ENCODE measurements at regions of chr2 and their contacts with region 1.

Region 1: DNA sequence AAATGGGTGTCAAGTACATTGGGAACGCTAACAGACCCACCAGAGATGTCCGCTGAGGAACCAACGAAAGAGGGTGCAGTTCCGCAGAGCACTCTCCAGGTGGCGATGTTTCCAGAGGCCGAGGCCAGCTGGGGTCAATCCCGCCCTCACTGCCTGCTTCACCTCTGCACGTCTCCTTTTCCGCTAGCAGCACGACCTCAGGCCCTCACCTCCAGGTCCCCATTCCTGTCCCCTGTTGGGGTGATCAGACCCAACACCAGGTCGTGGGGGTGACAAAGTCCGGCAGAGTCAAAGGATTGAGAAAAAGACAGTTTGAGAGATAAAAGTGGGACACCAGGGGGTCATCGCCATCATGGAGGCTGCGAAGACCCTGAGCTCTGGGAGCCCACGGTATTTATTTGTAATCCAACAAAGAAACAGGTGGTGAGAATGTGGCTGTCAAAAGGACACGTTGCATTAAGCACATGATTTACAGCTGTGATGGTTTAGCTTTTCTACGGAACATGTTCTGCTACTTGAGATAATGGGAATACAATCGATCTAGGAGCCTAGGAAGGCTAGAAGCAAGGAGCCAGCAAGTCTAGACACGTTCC is 27.3 kb downstream of the ZAP70 start:
- DNase-seq: peak; percentile 38 to 65 (median 60)
- H3K4me3 ChIP-seq: no peak overlapping the region
- H3K27ac ChIP-seq: no peak overlapping the region
- H3K4me1 ChIP-seq: peaks cover 0 to 7% (median 4%) of the 10 kb centered on the region in 4 experiments
- H3K27me3 ChIP-seq: no peaks in the 10 kb centered on the region

Region 2: GRCh38 chr2:97713296-97714083 is 27.2 kb before region 1 on chr2 and contains the start of gene ZAP70:
- CTCF ChIA-PET with region 1: interaction called, 131 read pairs
- POLR2A ChIA-PET with region 1: interaction called, 3 read pairs
- DNase-seq: peak in 2 of 3 donors; percentile 48 to 58
- H3K4me3 ChIP-seq: no peak within 1 kb of the TSS
- H3K27ac ChIP-seq: peak within 1 kb of the TSS; percentile 44 to 68
- H3K4me1 ChIP-seq: peaks cover 2 to 46% (median 41%) of the 10 kb centered on the region in 4 experiments
- H3K27me3 ChIP-seq: no peaks in the 10 kb centered on the region

Region 3: GRCh38 chr2:97722212-97722611 is 18.5 kb before region 1 on chr2:
- CTCF ChIA-PET with region 1: interaction called, 14 read pairs
- POLR2A ChIA-PET with region 1: no interaction called
- DNase-seq: no peak
- H3K4me3 ChIP-seq: no peak overlapping the region
- H3K27ac ChIP-seq: no peak overlapping the region
- H3K4me1 ChIP-seq: peaks cover 0 to 27% (median 24%) of the 10 kb centered on the region in 4 experiments
- H3K27me3 ChIP-seq: peaks cover 0 to 10% (median 0%) of the 10 kb centered on the region in 5 experiments

Region 4: DNA sequence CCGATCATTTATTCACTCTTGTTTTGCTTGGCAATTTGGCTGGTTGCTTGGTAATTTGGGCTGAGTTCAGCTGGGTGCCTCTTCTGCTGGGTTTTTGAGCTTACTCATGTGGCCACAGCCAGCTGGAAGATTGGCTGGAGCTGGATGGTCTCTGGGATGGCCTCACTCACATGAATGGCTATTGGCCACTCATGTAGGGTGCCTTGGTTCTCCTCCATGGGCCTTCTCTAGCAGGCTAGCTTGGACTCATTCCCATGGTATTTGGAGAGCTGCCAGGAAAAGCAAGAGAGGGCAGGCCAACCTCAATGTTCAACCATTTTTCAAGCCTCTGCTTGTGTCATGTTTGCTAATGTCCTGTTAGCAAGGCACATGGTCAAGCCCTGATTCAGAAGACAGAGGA is 10.4 kb before region 1 on chr2:
- CTCF ChIA-PET with region 1: interaction called, 29 read pairs
- POLR2A ChIA-PET with region 1: no interaction called
- DNase-seq: no peak
- H3K4me3 ChIP-seq: no peak overlapping the region
- H3K27ac ChIP-seq: no peak overlapping the region
- H3K4me1 ChIP-seq: no peaks in the 10 kb centered on the region
- H3K27me3 ChIP-seq: no peaks in the 10 kb centered on the region

Region 5: GRCh38 chr2:97761192-97761591 is 20.5 kb after region 1 on chr2:
- CTCF ChIA-PET with region 1: interaction called, 11 read pairs
- POLR2A ChIA-PET with region 1: interaction called, 3 read pairs
- DNase-seq: peak in 2 of 3 donors; percentile 32 to 60
- H3K4me3 ChIP-seq: peak overlapping the region in 1 of 7 experiments; percentile 52
- H3K27ac ChIP-seq: no peak overlapping the region
- H3K4me1 ChIP-seq: peaks cover 0 to 38% (median 7%) of the 10 kb centered on the region in 4 experiments
- H3K27me3 ChIP-seq: no peaks in the 10 kb centered on the region

Region 6: DNA sequence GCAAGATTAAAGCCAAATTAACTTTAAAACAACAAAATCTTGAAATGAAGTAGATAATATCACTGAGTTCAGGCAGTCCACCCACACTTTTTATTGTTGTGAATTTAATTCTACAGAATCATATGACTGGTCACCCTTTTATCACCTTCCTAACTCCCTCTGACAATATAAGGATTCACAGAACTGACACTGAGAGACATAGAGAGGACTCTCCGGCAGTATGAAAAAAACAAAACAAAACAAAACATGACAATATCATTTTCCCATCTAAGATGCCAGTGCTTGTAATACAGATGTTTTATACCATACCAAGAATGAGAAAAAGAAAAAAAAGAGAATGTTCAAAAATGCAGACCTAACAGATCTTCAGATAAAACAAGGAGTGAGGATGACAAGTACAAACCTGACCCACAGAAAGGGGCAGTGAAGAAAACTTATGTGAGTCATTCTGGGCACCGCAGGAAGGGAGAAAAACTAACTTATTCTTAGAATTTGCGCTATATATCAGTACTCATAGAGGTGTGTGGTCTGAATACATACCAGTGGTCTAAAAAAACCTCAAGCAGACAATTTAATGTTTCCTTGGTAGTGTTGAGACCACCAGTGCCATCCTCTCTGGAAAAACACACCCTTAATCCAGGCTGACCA is 109.3 kb after region 1 on chr2:
- CTCF ChIA-PET with region 1: no interaction called
- POLR2A ChIA-PET with region 1: no interaction called
- DNase-seq: peak in 1 of 3 donors; percentile 17
- H3K4me3 ChIP-seq: no peak overlapping the region
- H3K27ac ChIP-seq: no peak overlapping the region
- H3K4me1 ChIP-seq: peaks cover 0 to 9% (median 0%) of the 10 kb centered on the region in 4 experiments
- H3K27me3 ChIP-seq: no peaks in the 10 kb centered on the region